Activated T-helper 1 cell treated with anti-CD3 and anti-CD28 coated beads, Interleukin-12 subunit alpha, Interleukin-12 subunit beta, Interleukin-2, Interleukin-4 antibody, amounts not matched to agents 30 ng/mL and 10 ng/mL and 1 ng/mL, durations not matched to agents 14 hours and 24 hours and 36 hours (primary cell): ENCODE measurements at regions of chr4 and their contacts with region 1.

Region 1: GRCh38 chr4:158856852-158857251 is 88.0 kb downstream of the FNIP2 start:
- DNase-seq: no peak
- H3K4me3 Mint-ChIP-seq: no peak overlapping the region
- H3K27ac Mint-ChIP-seq: no peak overlapping the region
- H3K4me1 Mint-ChIP-seq: peaks cover 12% of the 10 kb centered on the region
- H3K27me3 Mint-ChIP-seq: no peaks in the 10 kb centered on the region

Region 2: DNA sequence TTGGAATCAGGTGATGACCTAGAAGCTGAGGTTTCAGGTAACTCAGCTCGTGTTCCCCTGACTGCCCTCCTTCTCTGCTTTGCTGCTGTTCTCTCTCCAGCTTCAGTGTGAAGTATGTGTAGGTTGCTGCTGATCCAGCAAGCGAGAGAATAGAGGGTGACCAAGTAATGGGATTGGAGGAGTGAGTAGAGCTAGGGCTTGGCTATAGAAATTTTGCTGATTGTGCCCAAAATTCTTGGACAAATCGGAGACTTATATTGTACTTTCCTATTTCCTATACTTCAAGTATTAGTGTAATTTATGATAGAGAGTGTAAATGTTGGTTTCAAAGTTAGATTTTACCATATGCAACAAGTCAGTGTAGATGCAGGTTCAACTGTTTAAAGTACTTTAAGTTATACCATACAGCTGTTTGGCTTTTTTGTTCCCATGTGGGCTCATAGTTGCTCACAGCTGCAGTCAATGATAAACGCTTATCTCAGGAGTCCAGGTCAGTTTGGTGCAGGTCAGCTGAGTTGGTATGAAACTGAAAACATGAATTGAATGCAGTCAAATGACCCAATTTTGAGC is 294.1 kb after region 1 on chr4:
- intact Hi-C with region 1: no loop called
- DNase-seq: no peak
- H3K4me3 Mint-ChIP-seq: no peak overlapping the region
- H3K27ac Mint-ChIP-seq: no peak overlapping the region
- H3K4me1 Mint-ChIP-seq: peaks cover 9% of the 10 kb centered on the region
- H3K27me3 Mint-ChIP-seq: no peaks in the 10 kb centered on the region

Region 3: DNA sequence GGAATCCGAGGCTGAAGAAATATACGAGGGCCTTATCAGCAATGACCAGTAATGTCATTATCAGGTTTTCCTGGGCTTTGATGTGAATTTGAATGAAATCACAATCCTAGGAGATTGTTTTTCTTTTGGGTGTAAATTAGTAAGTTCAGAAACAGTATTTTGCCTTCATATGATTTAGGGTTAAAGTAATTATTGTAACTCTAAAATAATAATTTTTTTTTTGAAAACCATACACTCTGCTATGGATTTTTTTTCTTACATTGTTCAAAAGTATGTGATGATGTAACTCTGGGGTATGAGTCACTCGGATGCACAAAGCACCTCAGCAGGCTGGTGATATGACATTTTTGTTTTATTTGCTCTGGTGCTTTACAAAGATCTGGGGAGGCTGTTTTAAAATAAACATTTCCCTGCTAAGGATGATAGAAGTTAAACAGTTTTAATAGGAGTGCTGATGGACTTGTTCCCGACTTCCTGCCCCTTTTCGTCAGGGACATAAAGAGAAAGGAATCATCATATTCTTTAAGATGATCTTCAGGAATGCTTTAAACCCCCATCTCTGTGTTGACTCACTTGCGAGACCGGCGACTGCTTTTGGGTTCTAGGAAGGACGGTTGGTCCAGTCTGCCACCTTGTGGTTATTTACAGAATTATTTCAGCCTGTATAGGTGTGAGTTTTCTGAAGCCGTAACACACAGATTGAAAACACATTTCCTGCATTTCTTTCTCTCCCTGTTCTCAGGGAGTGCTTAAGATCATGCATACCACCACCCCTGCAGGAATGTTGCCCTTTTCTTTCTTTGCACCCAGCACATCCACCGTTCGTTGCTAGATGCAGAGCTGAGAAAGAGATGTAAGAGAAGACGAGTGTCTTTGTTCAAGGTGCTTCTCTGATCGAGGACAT is 318.5 kb after region 1 on chr4:
- intact Hi-C with region 1: loop called (anchors 1 kb)
- DNase-seq: peak; percentile 51
- H3K4me3 Mint-ChIP-seq: no peak overlapping the region
- H3K27ac Mint-ChIP-seq: peak overlapping the region; percentile 49
- H3K4me1 Mint-ChIP-seq: peaks cover 64% of the 10 kb centered on the region
- H3K27me3 Mint-ChIP-seq: no peaks in the 10 kb centered on the region